ENCODE measurements at regions of chr17 and their contacts with region 1.

Region 1: DNA sequence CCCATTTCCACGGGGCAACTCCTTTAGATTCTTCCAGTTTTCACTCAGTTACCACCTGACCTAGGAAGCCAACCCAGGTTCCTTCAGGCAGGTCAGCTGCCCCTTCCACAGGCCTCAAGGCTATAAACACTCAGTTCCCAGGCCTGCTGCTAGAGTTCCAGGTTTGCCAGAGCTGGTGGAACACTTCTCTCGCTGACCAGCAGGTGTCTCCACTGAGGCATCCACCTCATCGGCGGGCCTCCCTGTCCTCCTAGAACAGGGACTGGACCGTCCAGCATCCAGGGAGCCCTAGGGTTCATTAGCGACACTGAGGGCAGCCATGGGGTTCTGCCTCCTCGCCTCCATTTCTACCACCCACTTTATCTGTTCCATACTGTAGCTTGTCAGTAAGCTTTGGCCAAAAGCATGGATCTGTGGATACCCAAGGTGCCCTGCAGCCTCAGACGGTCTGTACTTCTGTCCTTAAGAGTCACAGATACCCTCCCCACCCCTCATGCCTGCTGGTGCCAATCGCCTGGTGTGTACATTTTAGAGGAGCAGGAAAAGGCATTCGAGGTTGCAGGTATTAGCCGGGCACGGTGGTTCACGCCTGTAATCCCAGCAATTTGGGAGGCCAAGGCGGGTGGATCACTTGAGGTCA is 29.0 kb downstream of the PIMREG start:
- DNase-seq: no peak
- H3K4me3 ChIP-seq: no peak overlapping the region
- H3K27me3 ChIP-seq: no peaks in the 10 kb centered on the region
- CTCF ChIP-seq: peak; percentile 98

Region 2: DNA sequence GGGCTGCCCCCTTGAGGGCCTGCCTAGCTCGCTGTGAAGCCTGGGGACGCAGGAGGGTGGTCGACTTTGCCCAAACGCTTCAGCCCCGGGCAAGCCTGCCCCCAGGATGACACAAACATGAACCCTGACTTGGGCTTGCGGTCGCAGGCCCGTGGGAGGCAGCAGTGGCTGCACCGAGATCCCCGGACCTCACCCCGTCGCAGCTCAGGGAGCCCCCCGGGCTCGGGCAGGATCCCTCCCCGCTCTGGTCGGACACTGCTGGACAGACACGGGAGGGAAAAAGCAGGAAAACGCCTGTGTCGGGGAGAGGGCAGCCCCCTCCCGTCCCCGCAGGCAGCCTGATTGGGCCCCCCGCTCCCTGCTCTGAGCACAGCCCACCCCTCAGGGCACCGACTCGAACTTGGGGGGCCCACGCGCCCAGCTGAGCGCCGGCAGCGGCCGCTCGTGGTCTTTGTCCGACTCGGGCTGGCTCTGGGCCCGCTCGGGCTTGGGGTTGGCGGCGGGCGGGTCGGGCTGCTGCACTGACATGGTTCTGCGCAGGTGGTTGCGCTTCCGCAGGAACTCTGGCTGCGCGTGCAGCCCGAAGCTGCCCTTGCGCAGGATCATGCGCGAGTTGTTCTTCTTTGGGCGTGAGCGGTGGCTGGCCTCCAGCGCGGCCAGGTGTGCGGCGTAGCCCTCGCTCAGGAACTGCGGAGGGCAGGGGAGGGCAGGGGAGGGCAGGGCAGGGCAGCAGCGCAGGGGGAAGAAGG is 18.1 kb before region 1 on chr17:
- CTCF ChIA-PET with region 1: interaction called, 18 read pairs
- POLR2A ChIA-PET with region 1: no interaction called
- DNase-seq: no peak
- H3K4me3 ChIP-seq: peak overlapping the region; percentile 1; the same call in 1 of the 2 replicates
- H3K27me3 ChIP-seq: no peaks in the 10 kb centered on the region
- CTCF ChIP-seq: no peak

Region 3: DNA sequence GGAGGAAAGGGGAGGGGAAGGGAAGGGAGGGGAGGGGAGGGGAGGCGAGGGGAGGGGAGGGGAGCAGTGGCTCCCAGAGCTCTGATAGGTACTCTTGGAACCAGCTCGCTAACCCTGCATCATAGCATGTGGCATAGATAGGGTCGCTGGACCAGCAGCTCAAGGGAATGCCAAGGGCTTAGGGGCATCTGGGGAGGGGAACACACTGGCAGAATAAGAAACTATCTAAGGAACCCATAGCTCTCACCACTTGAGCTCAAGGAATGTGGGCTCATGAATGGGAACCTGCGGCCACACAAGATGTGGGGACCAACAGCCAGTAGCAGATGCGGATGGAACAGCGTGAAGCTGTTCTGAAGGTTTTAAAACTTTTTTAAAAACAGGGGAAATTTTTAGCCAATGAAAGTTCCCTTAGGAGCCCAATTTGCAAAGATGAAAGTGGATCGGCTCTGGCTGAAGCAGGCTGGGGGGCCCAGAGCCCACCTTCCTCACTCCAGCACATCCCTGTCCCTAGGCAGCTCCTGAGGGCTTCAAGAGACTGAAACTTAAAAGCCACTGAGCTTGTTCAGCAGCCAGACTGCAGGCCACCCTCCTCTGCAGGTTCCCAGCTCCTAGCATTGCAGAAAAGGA is 17.9 kb after region 1 on chr17:
- CTCF ChIA-PET with region 1: interaction called, 17 read pairs
- POLR2A ChIA-PET with region 1: no interaction called
- DNase-seq: no peak
- H3K4me3 ChIP-seq: no peak overlapping the region
- H3K27me3 ChIP-seq: peaks cover 2% of the 10 kb centered on the region; the same call in 1 of the 2 replicates
- CTCF ChIP-seq: no peak

Region 4: GRCh38 chr17:6548578-6549330 is 75.5 kb after region 1 on chr17:
- CTCF ChIA-PET with region 1: interaction called, 15 read pairs
- POLR2A ChIA-PET with region 1: no interaction called
- DNase-seq: no peak
- H3K4me3 ChIP-seq: no peak overlapping the region
- H3K27me3 ChIP-seq: peaks cover 2% of the 10 kb centered on the region; the same call in 1 of the 2 replicates
- CTCF ChIP-seq: no peak

Region 5: DNA sequence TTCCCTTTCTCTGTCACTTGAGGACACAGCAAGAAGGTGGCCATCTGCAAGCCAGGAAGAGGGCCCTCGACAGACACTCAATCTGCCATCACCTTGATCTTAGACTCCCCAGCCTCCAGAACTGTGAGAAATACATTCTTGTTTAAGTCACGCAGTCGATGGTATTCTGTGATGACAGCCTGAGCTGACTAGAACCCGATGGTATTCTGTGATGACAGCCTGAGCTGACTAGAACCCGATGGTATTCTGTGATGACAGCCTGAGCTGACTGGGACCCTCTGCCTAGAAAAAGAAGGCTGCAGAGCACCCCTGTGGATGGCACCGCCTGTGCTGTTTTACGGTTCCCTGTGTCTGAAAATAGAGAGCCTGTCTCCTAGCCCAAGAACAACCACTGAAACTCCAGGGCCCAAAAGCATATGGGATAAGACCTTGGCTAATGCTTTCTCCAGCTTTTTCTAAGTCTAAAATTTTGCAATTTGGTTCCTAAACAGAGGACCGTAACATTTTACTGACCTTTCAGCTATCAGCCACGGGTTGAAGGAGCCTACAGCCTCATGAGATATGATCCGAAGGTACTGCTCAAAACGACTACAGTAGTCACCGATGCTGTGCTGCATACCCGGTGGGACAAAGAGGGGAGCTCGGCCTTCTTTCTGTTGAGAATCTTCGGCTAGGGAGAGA is 116.2 kb after region 1 on chr17:
- CTCF ChIA-PET with region 1: interaction called, 20 read pairs
- POLR2A ChIA-PET with region 1: no interaction called
- DNase-seq: no peak
- H3K4me3 ChIP-seq: no peak overlapping the region
- H3K27me3 ChIP-seq: no peaks in the 10 kb centered on the region
- CTCF ChIP-seq: no peak